Calu3 (cell line): ENCODE measurements at regions of chr5 and their contacts with region 1.

Region 1: DNA sequence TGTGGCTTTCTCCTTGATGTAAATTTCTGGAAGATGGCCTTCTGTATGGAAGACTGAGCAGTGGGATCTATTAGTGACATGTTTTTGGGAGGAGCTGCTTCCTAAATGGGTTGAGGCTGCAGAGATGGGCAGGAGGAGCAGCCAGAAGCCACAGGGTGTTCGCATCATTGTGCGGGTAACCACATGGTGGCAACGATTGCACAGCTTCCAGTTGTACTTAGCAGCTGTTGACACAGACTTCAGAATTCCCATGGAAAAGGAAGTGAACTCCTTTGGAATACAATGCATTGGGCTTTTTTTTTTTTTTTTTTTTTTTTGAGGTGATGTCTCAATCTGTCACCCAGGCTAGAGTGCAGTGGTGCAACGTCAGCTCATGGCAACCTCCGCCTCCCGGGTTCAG is 297.3 kb downstream of the NR3C1 start:
- DNase-seq: peak; percentile 8
- H3K4me3 Mint-ChIP-seq: no peak overlapping the region
- H3K27ac Mint-ChIP-seq: no peak overlapping the region
- H3K4me1 Mint-ChIP-seq: no peaks in the 10 kb centered on the region
- H3K27me3 Mint-ChIP-seq: no peaks in the 10 kb centered on the region
- CTCF ChIP-seq: no peak

Region 2: GRCh38 chr5:143685246-143685802 is 579.1 kb after region 1 on chr5:
- CTCF ChIA-PET with region 1: no interaction called
- intact Hi-C with region 1: loop called (anchors 10 kb)
- DNase-seq: peak; percentile 34
- H3K4me3 Mint-ChIP-seq: no peak overlapping the region
- H3K27ac Mint-ChIP-seq: no peak overlapping the region
- H3K4me1 Mint-ChIP-seq: peaks cover 23% of the 10 kb centered on the region
- H3K27me3 Mint-ChIP-seq: no peaks in the 10 kb centered on the region
- CTCF ChIP-seq: no peak